A673 (cell line): ENCODE measurements at regions of chr20 and their contacts with region 1.

Region 1: GRCh38 chr20:7285918-7286556 is 518.6 kb downstream of the BMP2 start:
- DNase-seq: peak; percentile 86
- H3K4me3 ChIP-seq: no peak overlapping the region
- H3K27ac ChIP-seq: no peak overlapping the region
- H3K4me1 ChIP-seq: no peaks in the 10 kb centered on the region
- H3K27me3 ChIP-seq: peaks cover 3% of the 10 kb centered on the region
- CTCF ChIP-seq: peak; percentile 88

Region 2: GRCh38 chr20:6142348-6142993 is 1143.6 kb before region 1 on chr20:
- CTCF ChIA-PET with region 1: no interaction called
- POLR2A ChIA-PET with region 1: no interaction called
- intact Hi-C with region 1: loop called (anchors 10 kb)
- DNase-seq: peak; percentile 62
- H3K4me3 ChIP-seq: no peak overlapping the region
- H3K27ac ChIP-seq: no peak overlapping the region
- H3K4me1 ChIP-seq: no peaks in the 10 kb centered on the region
- H3K27me3 ChIP-seq: peaks cover 9% of the 10 kb centered on the region
- CTCF ChIP-seq: peak; percentile 81

Region 3: DNA sequence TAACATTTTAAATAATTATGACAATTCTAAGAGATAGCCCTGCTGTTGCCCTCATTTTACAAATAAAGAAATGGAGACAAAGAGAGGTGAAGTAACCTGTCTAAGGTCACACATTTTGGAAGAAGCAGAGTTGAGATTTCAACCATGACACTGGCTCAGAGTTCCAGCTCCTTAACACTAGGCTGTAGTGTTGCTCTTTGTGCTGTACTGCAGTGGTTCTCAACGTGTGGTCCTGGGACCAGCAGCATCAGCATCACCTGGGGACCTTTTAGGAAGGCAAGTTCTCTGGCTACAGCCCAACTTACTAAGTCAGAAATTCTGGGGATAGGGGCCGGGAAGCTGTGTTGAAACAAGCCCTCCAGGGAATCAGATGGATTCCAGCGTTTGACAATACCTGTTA is 1100.8 kb before region 1 on chr20:
- CTCF ChIA-PET with region 1: no interaction called
- POLR2A ChIA-PET with region 1: no interaction called
- intact Hi-C with region 1: loop called (anchors 10 kb)
- DNase-seq: no peak
- H3K4me3 ChIP-seq: no peak overlapping the region
- H3K27ac ChIP-seq: no peak overlapping the region
- H3K4me1 ChIP-seq: no peaks in the 10 kb centered on the region
- H3K27me3 ChIP-seq: peaks cover 24% of the 10 kb centered on the region
- CTCF ChIP-seq: no peak

Region 4: DNA sequence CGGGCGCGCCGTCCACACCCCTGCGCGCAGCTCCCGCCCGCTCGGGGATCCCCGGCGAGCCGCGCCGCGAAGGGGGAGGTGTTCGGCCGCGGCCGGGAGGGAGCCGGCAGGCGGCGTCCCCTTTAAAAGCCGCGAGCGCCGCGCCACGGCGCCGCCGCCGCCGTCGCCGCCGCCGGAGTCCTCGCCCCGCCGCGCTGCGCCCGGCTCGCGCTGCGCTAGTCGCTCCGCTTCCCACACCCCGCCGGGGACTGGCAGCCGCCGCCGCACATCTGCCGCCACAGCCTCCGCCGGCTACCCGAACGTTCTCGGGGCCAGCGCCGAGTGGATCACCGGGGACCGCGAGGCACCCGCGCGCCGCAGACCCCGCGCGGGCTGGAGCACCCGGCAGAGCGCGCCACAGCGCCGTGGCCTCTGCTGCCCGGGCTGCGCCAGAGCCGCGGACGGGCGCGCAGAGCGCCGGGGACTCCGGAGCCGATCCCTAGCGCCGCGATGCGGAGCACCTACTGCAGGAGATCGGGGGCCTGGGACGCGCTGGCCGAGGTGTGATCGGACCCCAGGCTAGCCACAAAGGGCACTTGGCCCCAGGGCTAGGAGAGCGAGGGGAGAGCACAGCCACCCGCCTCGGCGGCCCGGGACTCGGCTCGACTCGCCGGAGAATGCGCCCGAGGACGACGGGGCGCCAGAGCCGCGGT is 518.4 kb before region 1 on chr20 and contains the start of gene BMP2:
- CTCF ChIA-PET with region 1: no interaction called
- POLR2A ChIA-PET with region 1: no interaction called
- intact Hi-C with region 1: loop called (anchors 5 kb)
- DNase-seq: peak; percentile 49
- H3K4me3 ChIP-seq: peak within 1 kb of the TSS; percentile 41
- H3K27ac ChIP-seq: no peak within 1 kb of the TSS
- H3K4me1 ChIP-seq: peaks cover 5% of the 10 kb centered on the region
- H3K27me3 ChIP-seq: peaks cover 72% of the 10 kb centered on the region
- CTCF ChIP-seq: no peak
- total RNA-seq, gene BMP2: not detected in 2 replicates

Region 5: DNA sequence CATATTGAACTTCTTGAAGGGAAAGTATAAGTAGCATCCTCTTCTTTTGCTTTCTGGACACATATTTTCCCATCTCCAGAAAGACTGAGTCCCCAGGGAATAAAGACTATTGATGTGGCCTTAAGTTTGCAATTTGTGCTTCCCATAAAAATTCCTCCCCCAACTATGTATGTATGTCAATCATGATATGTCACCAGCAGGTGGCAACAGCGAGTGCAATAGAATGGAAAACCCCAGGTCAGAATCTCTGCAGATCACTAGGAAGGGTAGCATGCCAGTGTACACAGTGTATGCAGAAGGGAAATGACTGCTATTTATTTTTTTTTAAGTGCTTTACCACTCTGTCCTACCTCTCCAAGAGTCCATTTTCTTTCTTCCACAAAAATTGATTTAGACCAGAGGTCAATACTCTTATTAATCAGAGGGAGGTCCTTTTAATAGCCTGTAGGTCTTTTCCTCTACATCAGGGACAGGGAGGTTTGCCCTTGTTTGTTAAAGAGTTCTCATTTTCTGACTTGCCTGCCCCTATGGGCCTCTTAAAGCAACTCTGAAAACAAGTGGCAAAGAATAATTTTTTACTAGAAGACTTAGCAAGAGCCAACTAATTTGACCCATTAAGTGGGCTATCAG is 457.1 kb before region 1 on chr20:
- CTCF ChIA-PET with region 1: no interaction called
- POLR2A ChIA-PET with region 1: no interaction called
- intact Hi-C with region 1: loop called (anchors 5 kb)
- DNase-seq: peak; percentile 67
- H3K4me3 ChIP-seq: no peak overlapping the region
- H3K27ac ChIP-seq: no peak overlapping the region
- H3K4me1 ChIP-seq: no peaks in the 10 kb centered on the region
- H3K27me3 ChIP-seq: no peaks in the 10 kb centered on the region
- CTCF ChIP-seq: peak; percentile 75